A549 (cell line): ENCODE measurements at regions of chr16 and their contacts with region 1.

Region 1: DNA sequence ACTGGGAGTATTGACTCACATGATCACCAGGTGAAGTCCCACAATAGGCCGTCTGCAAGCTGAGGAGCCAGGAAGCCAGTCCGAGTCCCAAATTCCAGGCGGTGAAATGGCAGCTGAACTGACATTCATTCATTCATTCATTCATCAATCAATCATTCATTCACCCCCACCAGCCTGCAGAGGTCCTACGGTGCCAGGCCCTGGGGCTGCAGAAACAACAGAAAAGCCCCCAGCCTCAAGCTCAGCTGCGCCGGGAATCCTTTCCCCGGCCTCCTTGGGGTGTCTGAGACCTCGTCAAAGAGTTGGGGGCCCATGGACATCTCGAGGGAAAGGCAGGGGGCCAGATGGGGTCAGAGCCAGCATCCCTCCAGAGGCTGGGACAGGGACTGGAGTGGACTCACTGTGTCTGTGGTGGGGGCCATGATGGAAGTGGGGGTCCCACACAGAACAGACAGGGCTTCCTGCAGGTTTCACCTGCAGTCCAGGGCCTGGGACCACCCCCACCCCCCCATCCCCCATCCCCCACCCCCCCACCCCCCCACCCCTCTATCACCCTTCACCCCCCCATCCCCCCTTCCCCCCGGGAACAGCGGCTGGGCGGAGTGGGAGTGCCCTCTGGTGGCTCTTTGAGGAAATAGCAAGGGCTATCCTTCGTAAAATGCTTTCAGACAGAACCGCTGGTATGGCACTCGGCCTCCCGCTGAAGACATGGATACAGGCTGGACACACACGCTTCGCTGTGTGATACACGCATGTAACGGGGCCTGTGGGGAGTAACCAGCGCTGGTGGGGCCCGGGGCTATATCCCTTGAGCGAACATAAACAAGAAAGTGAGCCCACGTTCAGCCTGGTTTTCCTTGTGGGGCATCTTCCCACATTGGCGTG is 8.5 kb upstream of the ZC3H18 start:
- DNase-seq: peak; percentile 57 to 63
- ATAC-seq: peak; percentile 22 to 52; a peak in 5 of 6 replicates
- H3K4me3 ChIP-seq: 0 out of 3 replicates have a peak overlapping the region, but pooled peaks have one; percentile 10
- H3K27ac ChIP-seq: peak overlapping the region; percentile 15 to 65; a peak in 3 of 6 replicates
- H3K4me1 ChIP-seq: peaks cover 10% of the 10 kb centered on the region; the same call in 2 of the 3 replicates
- CTCF ChIP-seq: peak; percentile 48
- EP300 ChIP-seq: no peak
- POLR2A ChIP-seq: no peak
- RAD21 ChIP-seq: peak; percentile 67 to 81

Region 2: GRCh38 chr16:87380859-87381258 is 1180.9 kb before region 1 on chr16:
- CTCF ChIA-PET with region 1: no interaction called
- POLR2A ChIA-PET with region 1: interaction called, 13 read pairs
- DNase-seq: no peak
- ATAC-seq: no peak
- H3K4me3 ChIP-seq: no peak overlapping the region
- H3K27ac ChIP-seq: no peak overlapping the region
- H3K4me1 ChIP-seq: peaks cover 38% of the 10 kb centered on the region
- CTCF ChIP-seq: no peak
- EP300 ChIP-seq: no peak
- POLR2A ChIP-seq: no peak
- RAD21 ChIP-seq: no peak

Region 3: GRCh38 chr16:88442727-88443576 is 118.8 kb before region 1 on chr16:
- CTCF ChIA-PET with region 1: interaction called, 10 read pairs
- POLR2A ChIA-PET with region 1: no interaction called
- DNase-seq: peak; percentile 76 to 91
- ATAC-seq: peak; percentile 71 to 91
- H3K4me3 ChIP-seq: no peak overlapping the region
- H3K27ac ChIP-seq: peak overlapping the region; percentile 5 to 62; a peak in 4 of 6 replicates
- H3K4me1 ChIP-seq: peaks cover 13% of the 10 kb centered on the region; the same call in 2 of the 3 replicates
- CTCF ChIP-seq: peak; percentile 93
- EP300 ChIP-seq: no peak
- POLR2A ChIP-seq: no peak
- RAD21 ChIP-seq: peak; percentile 95 to 96

Region 4: GRCh38 chr16:88539652-88540345 is 21.9 kb before region 1 on chr16:
- CTCF ChIA-PET with region 1: interaction called, 12 read pairs
- POLR2A ChIA-PET with region 1: no interaction called
- DNase-seq: no peak
- ATAC-seq: peak; percentile 22 to 39; a peak in 4 of 6 replicates
- H3K4me3 ChIP-seq: no peak overlapping the region
- H3K27ac ChIP-seq: no peak overlapping the region
- H3K4me1 ChIP-seq: peaks cover 10% of the 10 kb centered on the region; the same call in 2 of the 3 replicates
- CTCF ChIP-seq: no peak
- EP300 ChIP-seq: no peak
- POLR2A ChIP-seq: no peak
- RAD21 ChIP-seq: no peak